ENCODE measurements at regions of chr7 and their contacts with region 1.

Region 1: GRCh38 chr7:38382684-38383083 is 109.2 kb upstream of the TARP start:
- DNase-seq: no peak
- CTCF ChIP-seq: no peak

Region 2: DNA sequence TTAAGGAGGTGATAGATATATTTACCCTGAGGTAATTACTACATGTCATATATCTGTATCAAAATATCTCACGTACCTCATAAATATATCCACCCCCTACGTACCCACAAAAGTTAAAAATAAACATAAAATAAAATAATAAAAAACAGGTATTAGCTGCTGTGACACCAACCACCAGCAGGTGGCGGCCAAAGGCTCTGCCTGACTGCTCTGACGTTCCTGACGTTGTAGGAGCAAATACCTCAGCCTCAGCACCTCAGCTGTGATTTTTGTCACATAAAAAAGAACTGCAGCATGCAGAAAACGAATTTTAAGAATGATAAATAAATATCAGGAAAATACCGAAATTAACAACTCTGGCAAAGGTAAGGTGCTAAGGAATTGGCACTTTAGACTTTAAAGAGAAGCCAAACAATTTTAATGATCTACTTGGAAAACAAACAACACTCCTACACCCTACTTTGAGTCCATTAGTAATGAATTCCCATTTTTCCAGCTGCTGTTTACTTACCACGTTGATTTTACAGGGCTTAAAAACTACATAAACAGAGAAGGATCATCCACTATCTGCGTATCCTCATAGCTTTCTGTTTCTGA is 16.1 kb after region 1 on chr7:
- CTCF ChIA-PET with region 1: interaction called, 29 read pairs
- POLR2A ChIA-PET with region 1: no interaction called
- DNase-seq: peak; percentile 53
- CTCF ChIP-seq: peak; percentile 88